ENCODE measurements at regions of chr11 and their contacts with region 1.

Region 1: DNA sequence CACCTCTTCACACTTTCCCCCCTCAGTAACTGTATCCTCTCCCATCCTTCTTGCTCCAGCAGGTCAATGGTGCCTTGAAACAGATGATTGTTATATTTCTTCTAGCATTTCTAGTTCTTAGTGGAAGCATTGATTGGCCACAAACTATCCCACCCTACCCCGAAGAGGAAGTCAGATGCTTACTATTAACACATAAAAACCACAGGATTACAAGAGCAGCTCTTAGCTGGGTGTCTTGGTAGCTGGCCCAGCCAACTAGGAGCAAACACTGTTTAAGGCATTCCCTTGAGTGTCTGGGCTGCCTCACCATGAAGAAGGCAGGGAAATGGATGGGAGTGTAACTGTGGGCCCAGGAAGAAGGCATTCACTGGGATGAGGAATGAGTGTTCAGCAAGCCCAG is 176.6 kb downstream of the GRIK4 start:
- DNase-seq: no peak
- H3K4me3 ChIP-seq: no peak overlapping the region
- H3K27ac ChIP-seq: no peak overlapping the region
- H3K4me1 ChIP-seq: no peaks in the 10 kb centered on the region
- H3K27me3 ChIP-seq: peaks cover 1% of the 10 kb centered on the region
- CTCF ChIP-seq: no peak

Region 2: GRCh38 chr11:121194731-121195596 is 506.8 kb after region 1 on chr11:
- CTCF ChIA-PET with region 1: interaction called, 4 read pairs
- dilution Hi-C with region 1: no loop called
- in situ Hi-C with region 1: no loop called
- intact Hi-C with region 1: loop called (anchors 5 kb)
- DNase-seq: peak; percentile 41
- H3K4me3 ChIP-seq: no peak overlapping the region
- H3K27ac ChIP-seq: no peak overlapping the region
- H3K4me1 ChIP-seq: no peaks in the 10 kb centered on the region
- H3K27me3 ChIP-seq: peaks cover 5% of the 10 kb centered on the region
- CTCF ChIP-seq: peak; percentile 77 to 81